Activated naive CD4-positive, alpha-beta T cell treated with anti-CD3 and anti-CD28 coated beads for 36 hours (primary cell): ENCODE measurements at regions of chr1 and their contacts with region 1.

Region 1: GRCh38 chr1:202462342-202463076 is 114.0 kb downstream of the PPP1R12B start:
- DNase-seq: no peak
- H3K4me3 Mint-ChIP-seq: no peak overlapping the region
- H3K27ac Mint-ChIP-seq: no peak overlapping the region
- H3K4me1 Mint-ChIP-seq: no peaks in the 10 kb centered on the region
- H3K27me3 Mint-ChIP-seq: no peaks in the 10 kb centered on the region

Region 2: GRCh38 chr1:202571347-202572339 is 109.1 kb after region 1 on chr1:
- CTCF ChIA-PET with region 1: interaction called, 7 read pairs
- intact Hi-C with region 1: loop called (anchors 1 kb)
- DNase-seq: peak; percentile 56
- H3K4me3 Mint-ChIP-seq: no peak overlapping the region
- H3K27ac Mint-ChIP-seq: no peak overlapping the region
- H3K4me1 Mint-ChIP-seq: peaks cover 3% of the 10 kb centered on the region
- H3K27me3 Mint-ChIP-seq: no peaks in the 10 kb centered on the region

Region 3: DNA sequence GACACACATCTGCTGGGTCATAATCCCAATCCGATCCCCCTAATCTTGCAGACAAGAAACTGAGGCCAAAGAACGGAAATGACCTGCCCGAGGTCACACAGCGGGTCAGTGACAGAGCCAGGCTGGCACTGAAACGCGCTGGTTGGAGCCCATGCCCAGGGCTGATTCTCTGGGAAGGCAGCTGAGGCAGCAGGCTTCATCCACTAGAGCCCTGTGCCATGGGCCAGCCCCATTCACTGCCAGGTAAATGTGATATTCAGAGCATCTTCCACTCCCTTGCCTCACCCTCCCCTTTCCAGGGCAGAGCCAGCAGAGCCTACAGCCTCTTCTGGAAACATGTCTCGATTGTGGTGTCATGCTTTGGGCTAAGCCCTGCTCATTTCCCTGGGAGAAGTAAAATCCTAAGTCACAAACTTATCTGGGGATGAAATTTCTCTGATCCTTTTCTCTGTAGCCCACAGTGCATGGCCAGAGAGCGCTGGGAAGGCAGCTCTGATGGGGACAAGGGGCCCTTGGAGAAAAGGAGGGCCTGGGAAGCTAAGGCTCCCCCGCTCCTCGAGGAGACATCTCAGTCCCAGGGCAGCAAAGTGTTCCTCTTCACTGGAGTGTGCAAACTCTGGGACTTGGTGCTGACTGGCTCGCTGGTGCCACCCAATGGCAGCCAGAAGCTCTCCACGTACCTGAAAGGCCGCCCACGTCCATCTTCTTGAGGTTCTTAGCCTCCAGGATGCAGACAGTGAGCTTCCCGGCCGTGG is 137.3 kb after region 1 on chr1:
- CTCF ChIA-PET with region 1: no interaction called
- intact Hi-C with region 1: no loop called
- DNase-seq: peak; percentile 50
- H3K4me3 Mint-ChIP-seq: no peak overlapping the region
- H3K27ac Mint-ChIP-seq: no peak overlapping the region
- H3K4me1 Mint-ChIP-seq: no peaks in the 10 kb centered on the region
- H3K27me3 Mint-ChIP-seq: no peaks in the 10 kb centered on the region